ENCODE measurements at regions of chr5 and their contacts with region 1.

Region 1: GRCh38 chr5:57366744-57367143 is 115.9 kb downstream of the ACTBL2 start:
- DNase-seq: peak; percentile 73
- ATAC-seq: peak; percentile 86
- H3K4me3 ChIP-seq: no peak overlapping the region
- H3K27ac ChIP-seq: peak overlapping the region; percentile 44; the same call in 1 of the 2 replicates
- H3K4me1 ChIP-seq: no peaks in the 10 kb centered on the region
- H3K27me3 ChIP-seq: no peaks in the 10 kb centered on the region
- CTCF ChIP-seq: no peak

Region 2: GRCh38 chr5:57414191-57414590 is 47.4 kb after region 1 on chr5:
- CTCF ChIA-PET with region 1: no interaction called
- POLR2A ChIA-PET with region 1: interaction called, 10 read pairs
- in situ Hi-C with region 1: no loop called
- intact Hi-C with region 1: no loop called
- DNase-seq: no peak
- ATAC-seq: no peak
- H3K4me3 ChIP-seq: no peak overlapping the region
- H3K27ac ChIP-seq: peak overlapping the region; percentile 57; the same call in 1 of the 2 replicates
- H3K4me1 ChIP-seq: peaks cover 3% of the 10 kb centered on the region
- H3K27me3 ChIP-seq: no peaks in the 10 kb centered on the region
- CTCF ChIP-seq: no peak

Measured in Panc1 (cell line).